ENCODE measurements at regions of chr10 and their contacts with region 1.

Region 1: GRCh38 chr10:113126229-113127201 is 176.5 kb downstream of the TCF7L2 start:
- DNase-seq: peak; percentile 71
- H3K4me3 Mint-ChIP-seq: peak overlapping the region; percentile 59
- H3K27ac Mint-ChIP-seq: no peak overlapping the region
- H3K4me1 Mint-ChIP-seq: peaks cover 7% of the 10 kb centered on the region
- H3K27me3 Mint-ChIP-seq: no peaks in the 10 kb centered on the region
- CTCF ChIP-seq: peak; percentile 78

Region 2: GRCh38 chr10:112565434-112566053 is 561.0 kb before region 1 on chr10:
- CTCF ChIA-PET with region 1: interaction called, 15 read pairs
- POLR2A ChIA-PET with region 1: interaction called, 3 read pairs
- intact Hi-C with region 1: loop called (anchors 1 kb)
- DNase-seq: peak; percentile 78
- H3K4me3 Mint-ChIP-seq: no peak overlapping the region
- H3K27ac Mint-ChIP-seq: no peak overlapping the region
- H3K4me1 Mint-ChIP-seq: no peaks in the 10 kb centered on the region
- H3K27me3 Mint-ChIP-seq: no peaks in the 10 kb centered on the region
- CTCF ChIP-seq: peak; percentile 80

Region 3: DNA sequence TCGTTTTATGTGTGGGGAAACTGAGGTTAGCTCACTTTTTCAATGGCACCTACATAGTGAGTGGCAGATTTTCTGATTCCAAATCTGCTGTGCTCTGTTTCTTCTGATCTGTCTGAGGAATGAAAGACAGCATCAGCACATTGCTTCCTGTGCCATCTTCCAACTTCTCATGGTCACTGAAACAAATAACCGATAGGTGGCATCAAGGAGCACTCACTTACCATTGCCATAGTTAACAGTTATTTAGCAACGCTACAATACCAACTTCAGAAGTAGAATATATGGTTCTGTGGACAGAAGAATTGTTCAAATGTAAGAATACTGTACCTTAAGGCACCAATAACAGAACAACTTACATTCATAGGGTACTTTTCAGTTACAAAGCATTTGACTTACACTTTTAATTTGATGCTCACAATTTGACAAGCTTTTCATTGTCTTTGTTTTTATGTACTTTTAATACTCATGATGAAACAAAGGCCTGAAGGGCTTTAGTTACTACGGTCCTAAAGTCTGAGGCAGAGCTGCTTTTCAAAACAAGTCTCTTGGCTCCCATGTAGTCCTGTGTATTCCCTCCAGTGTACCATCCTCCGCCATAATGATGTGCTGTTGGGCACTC is 405.3 kb before region 1 on chr10:
- CTCF ChIA-PET with region 1: interaction called, 9 read pairs
- POLR2A ChIA-PET with region 1: interaction called, 3 read pairs
- intact Hi-C with region 1: loop called (anchors 2 kb)
- DNase-seq: peak; percentile 71
- H3K4me3 Mint-ChIP-seq: no peak overlapping the region
- H3K27ac Mint-ChIP-seq: no peak overlapping the region
- H3K4me1 Mint-ChIP-seq: peaks cover 7% of the 10 kb centered on the region
- H3K27me3 Mint-ChIP-seq: no peaks in the 10 kb centered on the region
- CTCF ChIP-seq: peak; percentile 78

Region 4: GRCh38 chr10:112977426-112977898 is 149.1 kb before region 1 on chr10:
- CTCF ChIA-PET with region 1: interaction called, 13 read pairs
- POLR2A ChIA-PET with region 1: no interaction called
- intact Hi-C with region 1: no loop called
- DNase-seq: no peak
- H3K4me3 Mint-ChIP-seq: no peak overlapping the region
- H3K27ac Mint-ChIP-seq: no peak overlapping the region
- H3K4me1 Mint-ChIP-seq: no peaks in the 10 kb centered on the region
- H3K27me3 Mint-ChIP-seq: no peaks in the 10 kb centered on the region
- CTCF ChIP-seq: no peak

Region 5: DNA sequence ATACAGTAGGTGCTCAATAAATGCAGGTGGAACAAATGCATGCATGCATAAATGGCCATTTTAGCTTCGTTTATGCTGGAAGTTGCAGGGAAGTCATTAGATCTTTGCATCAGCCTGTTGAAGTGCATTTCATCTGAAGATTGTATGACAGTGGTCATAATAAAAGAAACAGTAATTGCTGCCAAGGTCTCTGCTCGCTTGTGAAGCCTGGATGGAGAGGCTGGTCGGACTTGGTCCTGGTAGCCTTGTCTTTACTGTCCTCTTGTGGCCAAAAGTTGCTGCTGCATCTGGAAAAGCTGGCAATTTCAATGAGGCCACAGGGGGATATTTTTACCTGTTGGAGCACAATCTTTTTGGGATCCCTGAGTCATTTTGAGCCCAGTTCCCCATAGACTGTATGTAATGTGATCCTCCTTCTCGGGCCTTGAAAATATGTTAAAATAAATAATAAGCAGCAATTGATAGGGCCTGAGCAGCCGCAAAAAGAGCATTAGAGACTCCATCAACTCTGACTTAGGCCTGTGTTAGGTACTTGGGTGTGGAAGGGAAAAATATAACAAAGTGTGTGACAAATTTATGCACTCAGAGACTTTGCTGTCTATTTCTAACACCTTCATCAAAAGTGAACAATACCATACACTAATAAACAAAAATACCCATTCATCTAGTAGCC is 394.7 kb after region 1 on chr10:
- CTCF ChIA-PET with region 1: interaction called, 4 read pairs
- POLR2A ChIA-PET with region 1: no interaction called
- intact Hi-C with region 1: loop called (anchors 1 kb)
- DNase-seq: peak; percentile 69
- H3K4me3 Mint-ChIP-seq: no peak overlapping the region
- H3K27ac Mint-ChIP-seq: no peak overlapping the region
- H3K4me1 Mint-ChIP-seq: no peaks in the 10 kb centered on the region
- H3K27me3 Mint-ChIP-seq: peaks cover 35% of the 10 kb centered on the region
- CTCF ChIP-seq: peak; percentile 96